GM13977 (cell line): ENCODE measurements at regions of chr13 and their contacts with region 1.

Region 1: DNA sequence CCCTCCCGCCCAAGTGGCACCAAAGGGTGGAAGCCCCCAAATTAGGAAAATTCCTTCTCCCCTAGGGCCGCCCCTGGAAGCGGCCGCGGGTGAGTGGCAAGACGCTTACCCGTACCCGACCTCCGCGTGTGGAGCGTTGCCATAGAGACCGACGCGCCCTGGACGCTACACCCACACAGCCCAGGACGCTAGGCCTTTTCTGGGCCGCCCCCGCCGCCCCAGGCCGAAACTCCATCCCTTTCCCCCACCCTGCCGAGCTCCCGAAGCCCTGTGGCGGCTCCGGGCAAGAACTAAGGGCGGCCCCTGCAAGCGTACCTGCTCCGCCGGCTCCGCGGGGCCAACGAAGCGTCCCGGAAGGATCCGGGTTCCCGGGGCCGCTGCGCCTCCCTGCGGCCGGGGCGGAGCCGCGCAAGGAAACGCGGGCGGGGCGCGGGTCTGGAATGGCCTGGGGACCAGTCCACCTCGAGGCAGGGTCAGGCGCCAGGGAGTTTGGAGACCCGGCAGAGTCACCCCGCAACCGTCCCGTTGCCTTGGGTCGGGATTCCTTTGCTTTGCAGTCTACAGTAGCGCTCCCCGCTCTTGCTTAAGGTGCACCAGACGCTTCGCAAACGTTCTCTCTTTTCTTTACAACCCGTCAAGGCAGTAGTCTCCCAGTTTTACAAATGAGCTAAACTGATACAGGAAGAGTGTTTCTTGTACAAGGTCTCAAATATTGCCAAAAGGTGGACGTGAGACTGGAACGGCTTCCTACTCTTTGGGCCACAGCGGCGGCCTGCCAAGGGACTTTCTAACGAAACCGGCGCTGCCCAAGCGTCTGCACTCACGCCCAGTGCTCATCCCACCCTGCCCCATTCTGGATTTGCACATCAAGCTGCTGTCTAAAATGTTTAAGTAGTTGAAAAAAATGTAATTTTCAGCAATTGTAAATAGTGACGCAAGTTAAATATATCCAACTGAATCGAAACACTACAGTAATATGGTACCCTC is at the start of gene NEK5:
- DNase-seq: peak; percentile 72
- CTCF ChIP-seq: peak; percentile 74

Region 2: GRCh38 chr13:51814825-51815650 is 314.0 kb before region 1 on chr13:
- in situ Hi-C with region 1: loop called (anchors 25 kb)
- DNase-seq: peak; percentile 76
- CTCF ChIP-seq: peak; percentile 83

Region 3: GRCh38 chr13:51895906-51896888 is 232.8 kb before region 1 on chr13:
- in situ Hi-C with region 1: loop called (anchors 10 kb)
- DNase-seq: peak; percentile 76
- CTCF ChIP-seq: peak; percentile 88

Region 4: DNA sequence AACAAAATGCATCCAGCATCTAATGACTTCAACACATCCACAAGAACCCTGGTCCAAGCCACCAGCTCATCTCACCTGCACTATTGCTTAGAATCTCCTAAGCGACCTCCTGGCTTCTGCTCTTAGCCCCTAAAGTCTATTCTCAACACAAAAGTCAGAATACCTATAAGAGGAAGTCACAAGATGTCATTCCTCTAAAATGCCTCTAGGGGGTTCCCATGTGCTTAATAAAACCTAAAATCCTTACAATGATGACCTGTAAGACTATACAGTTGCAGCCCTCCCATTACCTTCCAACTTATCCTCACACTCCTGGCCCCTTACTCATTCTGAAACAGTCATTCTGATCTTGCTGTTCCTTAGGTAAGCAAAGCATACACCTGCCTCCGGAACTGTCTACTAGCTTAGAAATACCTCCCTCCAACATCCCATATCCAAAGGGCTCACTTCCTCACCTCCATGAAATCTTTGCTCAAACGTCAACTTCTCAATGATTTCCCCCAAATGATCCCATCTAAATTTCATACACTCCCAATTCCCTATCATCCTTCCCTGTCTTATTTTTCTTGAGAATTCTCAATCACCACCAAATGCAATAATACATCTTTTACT is 127.8 kb before region 1 on chr13:
- in situ Hi-C with region 1: loop called (anchors 10 kb)
- DNase-seq: peak; percentile 73
- CTCF ChIP-seq: peak; percentile 58

Region 5: DNA sequence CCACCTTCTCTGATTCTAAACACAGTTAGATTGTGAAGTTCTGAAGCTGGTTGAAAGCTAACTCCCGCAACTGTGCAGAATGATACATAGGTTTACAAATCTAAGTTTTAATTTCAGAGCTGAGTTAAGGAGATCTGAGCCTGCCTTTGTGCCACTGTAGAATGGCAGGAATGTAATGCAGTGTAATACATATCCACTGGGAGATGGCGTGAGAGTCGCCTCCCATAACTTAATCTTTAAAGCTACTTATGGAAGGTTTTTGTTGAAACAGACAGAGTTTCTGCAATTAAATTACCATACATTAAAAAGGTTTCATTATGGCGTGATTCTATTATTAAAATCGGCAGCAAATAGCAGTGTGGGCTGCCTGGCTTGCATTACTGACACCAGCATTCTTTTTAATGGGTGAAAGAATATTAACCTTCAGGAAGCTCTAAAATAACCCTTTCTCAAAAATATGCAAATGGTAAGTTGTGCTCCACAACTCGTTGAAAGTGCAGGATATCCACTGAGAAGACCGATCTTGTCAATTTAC is 1157.0 kb after region 1 on chr13:
- in situ Hi-C with region 1: no loop called
- DNase-seq: no peak
- CTCF ChIP-seq: no peak